ENCODE measurements at regions of chr18 and their contacts with region 1.

Region 1: DNA sequence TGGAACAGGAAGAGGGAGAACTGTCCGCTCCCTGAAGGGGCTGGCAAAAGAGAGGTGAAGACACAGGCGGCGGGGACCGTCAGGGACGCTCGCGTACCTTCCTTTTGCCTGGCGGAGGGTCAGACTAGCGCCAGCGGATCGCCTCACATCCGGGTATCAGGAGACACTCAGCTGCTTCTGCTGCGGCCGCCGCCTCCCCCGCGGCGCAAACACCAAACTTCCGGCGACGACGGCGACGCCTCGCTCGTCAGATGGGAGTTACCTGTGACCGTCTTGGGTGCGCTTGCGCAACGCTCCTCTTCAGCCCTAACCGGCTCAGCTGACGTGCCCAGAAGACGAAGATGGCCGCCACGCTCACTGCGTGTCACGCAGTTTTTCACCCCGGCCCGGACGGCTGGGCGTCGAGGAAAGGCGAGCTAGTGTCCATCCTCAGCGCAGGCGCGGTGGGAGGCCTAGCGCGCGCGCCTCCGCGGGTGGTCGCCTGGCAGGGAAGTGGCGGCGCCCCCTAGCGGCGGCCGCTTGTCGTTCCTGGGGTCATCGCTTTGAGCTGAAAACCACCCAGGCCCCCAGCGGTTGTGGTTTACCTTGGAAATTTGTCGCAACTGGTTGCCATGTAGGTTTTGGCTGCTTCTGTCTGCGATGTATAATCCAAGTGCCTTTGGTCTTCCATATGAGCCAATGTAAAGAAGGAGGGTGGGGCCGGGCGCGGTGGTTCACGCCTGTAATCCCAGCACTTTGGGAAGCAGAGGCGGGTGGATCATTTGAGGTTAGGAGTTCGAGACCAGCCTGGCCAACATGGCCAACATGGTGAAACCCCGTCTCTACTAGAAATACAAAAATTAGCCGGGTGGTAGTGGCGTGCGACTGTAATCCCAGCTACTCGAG is at the start of gene ESCO1:
- DNase-seq: peak; percentile 93 to 97 (median 97)
- ATAC-seq: peak; percentile 92 to 97 (median 96)
- H3K4me3 ChIP-seq: peak within 1 kb of the TSS; percentile 67 to 97 (median 84)
- H3K27ac ChIP-seq: peak within 1 kb of the TSS; percentile 81 to 99 (median 94)
- H3K4me1 ChIP-seq: peaks cover 0 to 27% (median 14%) of the 10 kb centered on the region in 12 donors
- H3K27me3 ChIP-seq: no peaks in the 10 kb centered on the region
- CTCF ChIP-seq: peak; percentile 95 to 100 (median 98)
- POLR2A ChIP-seq: peak in 1 of 2 donors; percentile 79
- total RNA-seq, gene ESCO1: 7.6 to 11.1 (median 9.8) TPM

Region 2: GRCh38 chr18:21452796-21453510 is 147.8 kb before region 1 on chr18:
- intact Hi-C with region 1: no loop called
- DNase-seq: no peak
- ATAC-seq: peak in 1 of 4 donors; percentile 3
- H3K4me3 ChIP-seq: no peak overlapping the region
- H3K27ac ChIP-seq: peak overlapping the region in 2 of 12 donors; percentile 4 to 28
- H3K4me1 ChIP-seq: peaks cover 0 to 38% (median 7%) of the 10 kb centered on the region in 12 donors
- H3K27me3 ChIP-seq: no peaks in the 10 kb centered on the region
- CTCF ChIP-seq: no peak
- POLR2A ChIP-seq: no peak

Region 3: DNA sequence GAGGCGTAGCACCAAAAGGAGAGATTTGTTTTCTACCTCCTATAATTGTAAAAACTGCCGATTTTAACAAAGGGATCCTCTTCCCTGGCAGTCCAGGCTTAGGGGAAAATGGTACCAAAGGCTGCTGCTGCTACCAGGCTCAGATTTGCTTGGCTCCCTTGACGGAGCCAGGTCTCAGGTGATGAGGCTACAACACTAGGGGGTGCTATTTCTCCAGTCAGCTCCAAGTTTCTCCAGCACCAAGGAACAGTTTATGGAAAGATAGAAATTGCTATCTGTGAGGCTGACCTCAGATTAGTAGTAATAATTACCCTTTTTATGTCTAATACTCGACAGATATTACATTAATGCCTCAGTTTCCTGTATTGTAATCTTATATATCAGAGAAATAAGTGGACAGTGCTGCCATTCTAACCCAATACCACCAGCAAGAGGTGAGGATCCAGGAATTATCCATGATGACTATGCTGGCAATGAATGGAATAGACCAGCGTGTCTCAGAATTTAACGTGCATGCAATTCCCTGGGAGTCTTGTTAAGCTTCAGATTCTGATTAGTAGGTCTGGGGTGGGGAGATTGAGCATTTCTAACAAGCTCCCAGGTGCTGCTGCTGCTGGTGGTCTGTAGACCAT is 111.5 kb before region 1 on chr18:
- intact Hi-C with region 1: loop called in 2 of 10 experiments (anchors 10 kb)
- DNase-seq: no peak
- ATAC-seq: peak in 3 of 4 donors; percentile 65 to 81 (median 67)
- H3K4me3 ChIP-seq: no peak overlapping the region
- H3K27ac ChIP-seq: no peak overlapping the region
- H3K4me1 ChIP-seq: no peaks in the 10 kb centered on the region
- H3K27me3 ChIP-seq: no peaks in the 10 kb centered on the region
- CTCF ChIP-seq: peak; percentile 52 to 77 (median 67)
- POLR2A ChIP-seq: no peak

Region 4: GRCh38 chr18:21612125-21612991 is 11.6 kb after region 1 on chr18 and contains the start of gene SNRPD1:
- intact Hi-C with region 1: loop called in 1 of 10 experiments (anchors 1 kb)
- DNase-seq: peak; percentile 86 to 93 (median 91)
- ATAC-seq: peak; percentile 98 to 100 (median 100)
- H3K4me3 ChIP-seq: peak within 1 kb of the TSS; percentile 60 to 92 (median 72)
- H3K27ac ChIP-seq: peak within 1 kb of the TSS; percentile 30 to 93 (median 80)
- H3K4me1 ChIP-seq: peaks cover 2 to 34% (median 14%) of the 10 kb centered on the region in 12 donors
- H3K27me3 ChIP-seq: no peaks in the 10 kb centered on the region
- CTCF ChIP-seq: peak; percentile 85 to 100 (median 96)
- POLR2A ChIP-seq: peak in 1 of 2 donors; percentile 35
- total RNA-seq, gene SNRPD1: 2.5 to 31.0 (median 20.9) TPM

Region 5: GRCh38 chr18:21704603-21705364 is 104.0 kb after region 1 on chr18 and contains the start of gene ABHD3:
- intact Hi-C with region 1: loop called in 4 of 10 experiments (anchors 5 to 10 kb)
- DNase-seq: peak; percentile 94 to 97 (median 95)
- ATAC-seq: peak; percentile 99 to 100 (median 100)
- H3K4me3 ChIP-seq: peak within 1 kb of the TSS; percentile 46 to 99 (median 88)
- H3K27ac ChIP-seq: peak within 1 kb of the TSS; percentile 45 to 97 (median 92)
- H3K4me1 ChIP-seq: peaks cover 0 to 21% (median 7%) of the 10 kb centered on the region in 12 donors
- H3K27me3 ChIP-seq: no peaks in the 10 kb centered on the region
- CTCF ChIP-seq: peak in 11 of 12 donors; percentile 17 to 63 (median 48)
- POLR2A ChIP-seq: peak; percentile 70 to 97
- total RNA-seq, gene ABHD3: 2.1 to 15.6 (median 3.8) TPM

Region 6: GRCh38 chr18:21740724-21741510 is 140.1 kb after region 1 on chr18 and contains the start of gene MIB1:
- intact Hi-C with region 1: loop called in 2 of 10 experiments (anchors 5 to 10 kb)
- DNase-seq: peak; percentile 67 to 100 (median 73)
- ATAC-seq: peak; percentile 76 to 88 (median 86)
- H3K4me3 ChIP-seq: peak within 1 kb of the TSS; percentile 71 to 96 (median 89)
- H3K27ac ChIP-seq: peak within 1 kb of the TSS; percentile 96 to 99 (median 98)
- H3K4me1 ChIP-seq: peaks cover 0 to 38% (median 18%) of the 10 kb centered on the region in 12 donors
- H3K27me3 ChIP-seq: no peaks in the 10 kb centered on the region
- CTCF ChIP-seq: no peak
- POLR2A ChIP-seq: peak in 1 of 2 donors; percentile 74
- total RNA-seq, gene MIB1: 15.3 to 33.4 (median 24.0) TPM

Region 7: DNA sequence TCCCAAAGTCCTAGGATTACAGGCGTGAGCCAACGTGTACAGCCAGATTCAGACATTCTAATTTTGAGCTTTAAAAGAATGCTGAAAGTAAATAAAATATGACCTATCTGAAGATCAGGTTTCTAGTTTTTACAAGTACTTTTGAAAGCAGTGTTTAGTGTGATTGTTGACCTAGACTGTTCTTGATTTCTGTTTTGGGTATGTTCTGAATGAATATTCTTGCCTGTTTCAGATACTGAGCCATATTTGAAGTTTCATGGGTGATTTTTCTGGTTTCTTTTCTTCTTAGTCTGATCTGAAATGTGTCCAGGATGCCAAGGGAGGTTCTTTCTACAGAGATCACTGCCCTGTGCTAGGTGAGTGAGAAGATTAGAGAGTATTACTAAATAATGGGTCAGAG is 177.0 kb after region 1 on chr18:
- intact Hi-C with region 1: no loop called
- DNase-seq: no peak
- ATAC-seq: no peak
- H3K4me3 ChIP-seq: no peak overlapping the region
- H3K27ac ChIP-seq: no peak overlapping the region
- H3K4me1 ChIP-seq: no peaks in the 10 kb centered on the region
- H3K27me3 ChIP-seq: no peaks in the 10 kb centered on the region
- CTCF ChIP-seq: no peak
- POLR2A ChIP-seq: no peak

Region 8: DNA sequence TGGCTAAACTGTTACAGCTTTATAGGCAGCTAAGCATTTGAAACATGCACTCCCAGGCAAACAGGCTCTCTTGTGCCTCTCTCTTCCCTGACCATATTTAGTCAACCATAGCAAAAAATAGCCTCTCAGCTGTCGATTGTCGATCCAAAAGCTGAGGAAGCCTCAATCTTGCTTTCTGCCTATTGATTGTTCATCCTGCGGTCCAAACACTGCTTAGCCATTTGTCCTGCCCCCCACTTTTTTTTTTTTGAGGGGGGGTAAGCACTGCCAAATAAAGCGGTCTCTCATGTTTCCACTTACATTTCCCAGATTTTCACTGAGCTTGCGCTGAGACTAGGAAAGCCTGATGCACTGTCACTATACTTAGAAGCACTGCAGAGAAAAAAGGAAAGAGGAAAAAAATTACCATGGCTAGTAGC is 230.7 kb after region 1 on chr18:
- intact Hi-C with region 1: loop called in 1 of 10 experiments (anchors 10 kb)
- DNase-seq: peak in 4 of 5 donors; percentile 35 to 65 (median 56)
- ATAC-seq: peak; percentile 55 to 86 (median 76)
- H3K4me3 ChIP-seq: peak overlapping the region in 11 of 12 donors; percentile 34 to 62 (median 51)
- H3K27ac ChIP-seq: peak overlapping the region; percentile 61 to 83 (median 78)
- H3K4me1 ChIP-seq: peaks cover 0 to 18% (median under 1%) of the 10 kb centered on the region in 12 donors
- H3K27me3 ChIP-seq: no peaks in the 10 kb centered on the region
- CTCF ChIP-seq: no peak
- POLR2A ChIP-seq: peak in 1 of 2 donors; percentile 38

Measured in heart left ventricle (tissue), 16 donors.